ENCODE measurements at regions of chr4 and their contacts with region 1.

Region 1: GRCh38 chr4:74623041-74623440 is 171.3 kb downstream of the BTC start:
- DNase-seq: peak; percentile 52 to 65
- H3K4me3 ChIP-seq: no peak overlapping the region
- H3K4me3 Mint-ChIP-seq: peak overlapping the region; percentile 19
- H3K27ac Mint-ChIP-seq: peak overlapping the region; percentile 86
- H3K4me1 ChIP-seq: peaks cover 94% of the 10 kb centered on the region
- H3K4me1 Mint-ChIP-seq: peaks cover 55% of the 10 kb centered on the region
- H3K27me3 ChIP-seq: no peaks in the 10 kb centered on the region
- H3K27me3 Mint-ChIP-seq: no peaks in the 10 kb centered on the region
- CTCF ChIP-seq: peak; percentile 60 to 65

Region 2: GRCh38 chr4:74376888-74377483 is 246.1 kb before region 1 on chr4:
- CTCF ChIA-PET with region 1: interaction called, 11 read pairs
- POLR2A ChIA-PET with region 1: no interaction called
- intact Hi-C with region 1: loop called (anchors 1 kb)
- DNase-seq: peak in 1 of 2 experiments; percentile 30
- H3K4me3 ChIP-seq: no peak overlapping the region
- H3K4me3 Mint-ChIP-seq: no peak overlapping the region
- H3K27ac Mint-ChIP-seq: no peak overlapping the region
- H3K4me1 ChIP-seq: peaks cover 41% of the 10 kb centered on the region
- H3K4me1 Mint-ChIP-seq: peaks cover 9% of the 10 kb centered on the region
- H3K27me3 ChIP-seq: no peaks in the 10 kb centered on the region
- H3K27me3 Mint-ChIP-seq: no peaks in the 10 kb centered on the region
- CTCF ChIP-seq: peak; percentile 44 to 55

Region 3: GRCh38 chr4:74479009-74479408 is 144.0 kb before region 1 on chr4:
- CTCF ChIA-PET with region 1: no interaction called
- POLR2A ChIA-PET with region 1: no interaction called
- intact Hi-C with region 1: loop called (anchors 1 kb)
- DNase-seq: peak in 1 of 2 experiments; percentile 52
- H3K4me3 ChIP-seq: no peak overlapping the region
- H3K4me3 Mint-ChIP-seq: peak overlapping the region; percentile 57
- H3K27ac Mint-ChIP-seq: peak overlapping the region; percentile 85
- H3K4me1 ChIP-seq: peaks cover 55% of the 10 kb centered on the region
- H3K4me1 Mint-ChIP-seq: peaks cover 53% of the 10 kb centered on the region
- H3K27me3 ChIP-seq: no peaks in the 10 kb centered on the region
- H3K27me3 Mint-ChIP-seq: no peaks in the 10 kb centered on the region
- CTCF ChIP-seq: no peak

Region 4: GRCh38 chr4:74539044-74539790 is 83.8 kb before region 1 on chr4:
- CTCF ChIA-PET with region 1: interaction called, 5 read pairs
- POLR2A ChIA-PET with region 1: interaction called, 3 read pairs
- intact Hi-C with region 1: loop called (anchors 1 kb)
- DNase-seq: peak in 1 of 2 experiments; percentile 51
- H3K4me3 ChIP-seq: no peak overlapping the region
- H3K4me3 Mint-ChIP-seq: peak overlapping the region; percentile 22
- H3K27ac Mint-ChIP-seq: peak overlapping the region; percentile 8
- H3K4me1 ChIP-seq: peaks cover 100% of the 10 kb centered on the region
- H3K4me1 Mint-ChIP-seq: peaks cover 54% of the 10 kb centered on the region
- H3K27me3 ChIP-seq: no peaks in the 10 kb centered on the region
- H3K27me3 Mint-ChIP-seq: no peaks in the 10 kb centered on the region
- CTCF ChIP-seq: no peak

Region 5: DNA sequence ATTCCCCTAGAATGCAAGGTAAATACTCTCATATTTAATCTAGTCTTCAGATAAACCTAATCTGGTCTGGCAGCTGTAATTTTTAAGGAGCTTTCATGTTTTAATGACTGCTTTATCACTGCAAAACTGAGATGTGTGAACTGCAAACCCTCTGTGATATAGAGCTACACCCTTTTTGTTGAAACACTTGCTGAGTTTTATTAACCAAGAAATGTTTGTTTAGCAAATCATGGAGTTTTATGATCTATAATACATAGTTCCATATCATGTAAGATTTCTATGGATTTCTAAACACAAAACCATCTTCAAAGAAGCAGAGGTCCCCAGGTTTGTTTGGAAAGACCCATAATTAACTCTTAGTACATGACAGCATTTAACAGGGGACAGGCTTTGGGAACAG is 44.9 kb after region 1 on chr4:
- CTCF ChIA-PET with region 1: interaction called, 7 read pairs
- POLR2A ChIA-PET with region 1: no interaction called
- intact Hi-C with region 1: loop called (anchors 1 kb)
- DNase-seq: peak in 1 of 2 experiments; percentile 57
- H3K4me3 ChIP-seq: no peak overlapping the region
- H3K4me3 Mint-ChIP-seq: peak overlapping the region; percentile 2
- H3K27ac Mint-ChIP-seq: peak overlapping the region; percentile 67
- H3K4me1 ChIP-seq: peaks cover 75% of the 10 kb centered on the region
- H3K4me1 Mint-ChIP-seq: peaks cover 78% of the 10 kb centered on the region
- H3K27me3 ChIP-seq: no peaks in the 10 kb centered on the region
- H3K27me3 Mint-ChIP-seq: no peaks in the 10 kb centered on the region
- CTCF ChIP-seq: no peak

Region 6: GRCh38 chr4:74932816-74933561 is 309.9 kb after region 1 on chr4 and contains the start of gene PARM1:
- CTCF ChIA-PET with region 1: no interaction called
- POLR2A ChIA-PET with region 1: no interaction called
- intact Hi-C with region 1: no loop called
- DNase-seq: peak; percentile 90 to 91
- H3K4me3 ChIP-seq: peak within 1 kb of the TSS; percentile 66
- H3K4me3 Mint-ChIP-seq: peak within 1 kb of the TSS; percentile 89
- H3K27ac Mint-ChIP-seq: peak within 1 kb of the TSS; percentile 53
- H3K4me1 ChIP-seq: peaks cover 5% of the 10 kb centered on the region; the same call in 1 of the 2 replicates
- H3K4me1 Mint-ChIP-seq: peaks cover 14% of the 10 kb centered on the region
- H3K27me3 ChIP-seq: peaks cover 2% of the 10 kb centered on the region
- H3K27me3 Mint-ChIP-seq: peaks cover 3% of the 10 kb centered on the region
- CTCF ChIP-seq: peak; percentile 79 to 85
- total RNA-seq, gene PARM1: 1.7 and 2.3 TPM in 2 replicates